ENCODE measurements at regions of chr3 and their contacts with region 1.

Region 1: GRCh38 chr3:186566851-186567675 is at the start of gene TBCCD1:
- DNase-seq: peak; percentile 94
- H3K4me3 ChIP-seq: peak within 1 kb of the TSS; percentile 61
- H3K27ac ChIP-seq: peak within 1 kb of the TSS; percentile 81
- H3K4me1 ChIP-seq: peaks cover 7% of the 10 kb centered on the region
- H3K27me3 ChIP-seq: no peaks in the 10 kb centered on the region
- CTCF ChIP-seq: no peak
- total RNA-seq, gene TBCCD1: 10.4 to 14.3 TPM

Region 2: GRCh38 chr3:186783073-186783730 is 216.1 kb after region 1 on chr3 and contains the start of gene EIF4A2:
- intact Hi-C with region 1: loop called (anchors 5 kb)
- DNase-seq: peak; percentile 91
- H3K4me3 ChIP-seq: peak within 1 kb of the TSS; percentile 77
- H3K27ac ChIP-seq: peak within 1 kb of the TSS; percentile 90
- H3K4me1 ChIP-seq: peaks cover 5% of the 10 kb centered on the region
- H3K27me3 ChIP-seq: no peaks in the 10 kb centered on the region
- CTCF ChIP-seq: no peak
- total RNA-seq, gene EIF4A2: 337 to 366 TPM